H1 (cell line): ENCODE measurements at regions of chr3 and their contacts with region 1.

Region 1: DNA sequence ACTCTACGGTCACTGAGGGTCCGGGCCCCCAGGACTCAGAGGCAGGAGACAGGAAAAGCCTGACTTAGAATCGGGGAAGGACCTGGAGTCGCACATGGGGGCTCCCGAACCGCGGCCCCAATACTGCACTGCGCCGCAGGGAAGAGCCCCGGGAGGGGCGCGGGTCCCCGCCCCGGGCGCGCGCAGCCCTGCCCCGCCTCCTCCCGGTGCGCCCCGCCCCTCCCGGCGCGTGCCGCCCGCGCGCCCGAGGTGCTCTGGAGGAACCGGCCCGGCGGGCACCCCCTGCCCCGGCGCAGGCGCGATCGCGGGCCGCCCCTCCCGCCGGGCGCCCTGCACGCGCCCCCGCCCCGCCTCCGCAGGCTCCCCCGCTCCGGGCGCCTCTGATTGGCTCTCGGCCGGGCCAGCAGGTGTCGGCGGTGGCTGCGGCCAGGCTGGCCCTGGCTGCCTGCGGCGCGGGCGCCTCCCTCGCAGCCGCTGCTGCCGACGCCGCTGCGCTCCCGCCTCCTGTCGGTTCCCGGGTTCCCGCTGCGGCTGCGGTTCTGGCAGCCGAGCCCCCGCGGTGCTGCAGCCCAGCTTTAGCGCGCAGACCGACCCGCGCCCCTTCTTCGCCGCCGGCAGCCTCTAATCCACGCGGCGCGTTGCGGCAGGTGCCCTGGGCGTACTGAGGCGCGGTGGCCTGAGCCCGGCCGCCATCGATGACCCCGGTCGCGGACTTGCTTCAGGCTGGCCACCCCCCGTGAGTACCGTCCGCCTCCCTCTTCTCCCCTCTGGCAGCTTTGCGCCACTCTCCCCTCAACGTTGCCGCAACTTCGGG is at the start of gene MYRIP:
- DNase-seq: peak in 1 of 2 experiments; percentile 78
- H3K4me3 ChIP-seq: peak within 1 kb of the TSS; percentile 57 to 70 (median 66)
- H3K27ac ChIP-seq: no peak within 1 kb of the TSS
- H3K4me1 ChIP-seq: peaks cover 0 to 3% (median 1%) of the 10 kb centered on the region in 4 experiments; a peak in 3 of 7 replicates
- H3K27me3 ChIP-seq: peaks cover 8 to 42% (median 30%) of the 10 kb centered on the region in 4 experiments
- CTCF ChIP-seq: no peak
- EP300 ChIP-seq: peak in 1 of 2 experiments; percentile 9; a peak in 1 of 3 replicates
- POLR2A ChIP-seq: no peak
- RAD21 ChIP-seq: no peak
- total RNA-seq, gene MYRIP: 3.4 and 4.3 TPM in 2 replicates

Region 2: DNA sequence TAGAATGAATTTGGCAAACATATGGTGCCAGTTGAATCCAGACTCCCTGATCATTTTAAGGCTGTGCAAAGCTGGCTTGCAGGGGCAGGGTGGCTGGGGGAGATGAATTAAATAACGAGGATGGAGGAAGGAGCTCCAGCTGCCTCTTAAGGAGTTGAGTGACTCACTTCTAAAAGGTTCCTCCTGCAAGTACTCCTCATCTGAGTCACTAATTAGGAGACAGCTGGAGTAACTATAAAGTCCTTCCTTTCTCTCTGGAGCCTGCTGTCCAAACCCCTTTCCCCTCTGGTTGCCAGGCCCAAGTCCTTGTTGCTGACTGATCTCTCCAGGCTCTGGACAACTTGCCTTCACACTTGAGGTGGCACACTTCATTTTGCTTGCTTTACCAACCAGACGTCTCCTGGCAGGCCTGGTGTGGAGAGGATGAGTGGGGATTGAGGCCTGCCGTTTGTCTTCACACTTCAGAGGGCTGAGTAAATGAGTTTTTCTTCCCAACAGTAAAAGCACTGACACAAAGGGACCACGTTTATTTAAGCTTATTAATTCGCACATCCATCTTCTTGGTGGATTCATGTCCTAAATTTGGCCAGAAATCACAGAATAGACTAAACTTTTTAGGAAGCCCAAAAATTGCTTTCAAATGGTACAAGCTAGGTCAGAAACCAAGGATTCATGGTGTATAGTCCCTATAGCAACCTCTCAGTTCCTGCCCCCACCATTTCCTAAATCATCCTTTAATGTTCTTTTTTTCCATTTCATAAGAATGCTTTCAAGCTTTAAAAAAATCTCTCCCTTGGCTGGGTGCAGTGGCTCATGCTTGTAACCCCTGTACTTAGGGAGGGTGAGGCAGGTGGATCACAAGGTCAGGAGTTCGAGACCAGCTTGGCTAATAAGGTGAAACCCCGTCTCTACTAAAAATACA is 90.5 kb before region 1 on chr3:
- CTCF ChIA-PET with region 1: no interaction called
- POLR2A ChIA-PET with region 1: no interaction called
- DNase-seq: no peak
- H3K4me3 ChIP-seq: no peak overlapping the region
- H3K27ac ChIP-seq: no peak overlapping the region
- H3K4me1 ChIP-seq: no peaks in the 10 kb centered on the region
- H3K27me3 ChIP-seq: no peaks in the 10 kb centered on the region
- CTCF ChIP-seq: no peak
- EP300 ChIP-seq: no peak
- POLR2A ChIP-seq: no peak
- RAD21 ChIP-seq: no peak

Region 3: DNA sequence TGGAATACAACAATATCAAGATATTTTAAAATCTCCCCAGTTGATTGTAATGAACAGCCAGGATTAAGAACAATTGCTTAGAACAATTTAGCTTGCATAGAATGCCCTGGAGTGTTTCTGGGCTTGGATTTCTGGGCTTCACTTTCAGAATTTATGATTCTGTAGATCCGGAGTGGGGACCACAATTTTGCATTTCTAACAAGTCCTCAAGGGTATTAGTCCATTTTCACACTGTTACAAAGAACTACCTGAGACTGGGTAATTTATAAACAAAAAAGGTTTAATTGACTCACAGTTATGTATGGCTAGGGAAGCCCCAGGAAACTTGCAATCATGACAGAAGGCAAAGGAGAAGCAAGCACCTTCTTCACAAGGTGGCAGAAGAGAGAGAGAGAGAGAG is 54.3 kb before region 1 on chr3:
- CTCF ChIA-PET with region 1: interaction called, 12 read pairs
- POLR2A ChIA-PET with region 1: no interaction called
- DNase-seq: no peak
- H3K4me3 ChIP-seq: no peak overlapping the region
- H3K27ac ChIP-seq: no peak overlapping the region
- H3K4me1 ChIP-seq: no peaks in the 10 kb centered on the region
- H3K27me3 ChIP-seq: no peaks in the 10 kb centered on the region
- CTCF ChIP-seq: no peak
- EP300 ChIP-seq: no peak
- POLR2A ChIP-seq: no peak
- RAD21 ChIP-seq: no peak

Region 4: GRCh38 chr3:39766433-39766832 is 43.0 kb before region 1 on chr3:
- CTCF ChIA-PET with region 1: no interaction called
- POLR2A ChIA-PET with region 1: no interaction called
- DNase-seq: no peak
- H3K4me3 ChIP-seq: no peak overlapping the region
- H3K27ac ChIP-seq: no peak overlapping the region
- H3K4me1 ChIP-seq: no peaks in the 10 kb centered on the region
- H3K27me3 ChIP-seq: no peaks in the 10 kb centered on the region
- CTCF ChIP-seq: no peak
- EP300 ChIP-seq: no peak
- POLR2A ChIP-seq: no peak
- RAD21 ChIP-seq: no peak

Region 5: GRCh38 chr3:39783680-39784079 is 25.7 kb before region 1 on chr3:
- CTCF ChIA-PET with region 1: no interaction called
- POLR2A ChIA-PET with region 1: no interaction called
- DNase-seq: no peak
- H3K4me3 ChIP-seq: no peak overlapping the region
- H3K27ac ChIP-seq: no peak overlapping the region
- H3K4me1 ChIP-seq: no peaks in the 10 kb centered on the region
- H3K27me3 ChIP-seq: no peaks in the 10 kb centered on the region
- CTCF ChIP-seq: no peak
- EP300 ChIP-seq: no peak
- POLR2A ChIP-seq: no peak
- RAD21 ChIP-seq: no peak

Region 6: GRCh38 chr3:39794880-39795279 is 14.5 kb before region 1 on chr3:
- CTCF ChIA-PET with region 1: interaction called, 15 read pairs
- POLR2A ChIA-PET with region 1: no interaction called
- DNase-seq: no peak
- H3K4me3 ChIP-seq: no peak overlapping the region
- H3K27ac ChIP-seq: no peak overlapping the region
- H3K4me1 ChIP-seq: no peaks in the 10 kb centered on the region
- H3K27me3 ChIP-seq: no peaks in the 10 kb centered on the region
- CTCF ChIP-seq: no peak
- EP300 ChIP-seq: no peak
- POLR2A ChIP-seq: no peak
- RAD21 ChIP-seq: no peak

Region 7: DNA sequence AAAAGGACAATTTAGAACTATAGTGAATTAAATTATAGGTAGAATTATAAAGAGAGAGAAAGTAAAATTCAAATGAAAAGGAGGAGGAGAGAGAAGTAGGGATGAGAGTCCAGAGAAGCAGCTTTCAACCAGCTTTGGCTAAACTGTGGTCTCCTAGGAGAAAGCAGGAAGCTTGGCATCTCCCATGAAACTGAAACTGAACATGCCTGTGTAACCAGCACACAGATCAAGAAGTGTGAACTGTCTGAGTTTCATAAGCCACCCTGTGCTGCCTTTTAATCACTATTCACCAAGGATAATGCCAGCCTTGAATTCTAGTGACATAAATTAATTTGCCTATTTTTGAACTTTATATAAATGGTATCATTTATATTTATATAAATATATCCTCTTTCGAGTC is 128.5 kb after region 1 on chr3:
- CTCF ChIA-PET with region 1: no interaction called
- POLR2A ChIA-PET with region 1: no interaction called
- DNase-seq: no peak
- H3K4me3 ChIP-seq: no peak overlapping the region
- H3K27ac ChIP-seq: no peak overlapping the region
- H3K4me1 ChIP-seq: no peaks in the 10 kb centered on the region
- H3K27me3 ChIP-seq: no peaks in the 10 kb centered on the region
- CTCF ChIP-seq: no peak
- EP300 ChIP-seq: no peak
- POLR2A ChIP-seq: no peak
- RAD21 ChIP-seq: no peak

Region 8: GRCh38 chr3:39990532-39990931 is 181.1 kb after region 1 on chr3:
- CTCF ChIA-PET with region 1: interaction called, 27 read pairs
- POLR2A ChIA-PET with region 1: interaction called, 4 read pairs
- DNase-seq: peak in 1 of 2 experiments; percentile 55
- H3K4me3 ChIP-seq: no peak overlapping the region
- H3K27ac ChIP-seq: no peak overlapping the region
- H3K4me1 ChIP-seq: no peaks in the 10 kb centered on the region
- H3K27me3 ChIP-seq: no peaks in the 10 kb centered on the region
- CTCF ChIP-seq: peak in 2 of 3 experiments; percentile 68 to 77; a peak in 3 of 4 replicates
- EP300 ChIP-seq: no peak
- POLR2A ChIP-seq: no peak
- RAD21 ChIP-seq: peak; percentile 90 to 91